ENCODE measurements at regions of chr4 and their contacts with region 1.

Region 1: GRCh38 chr4:2763511-2763967 is 7.4 kb upstream of the TNIP2 start:
- DNase-seq: no peak
- H3K4me3 Mint-ChIP-seq: peak overlapping the region; percentile 40
- H3K27ac Mint-ChIP-seq: no peak overlapping the region
- H3K4me1 Mint-ChIP-seq: peaks cover 14% of the 10 kb centered on the region
- H3K27me3 Mint-ChIP-seq: no peaks in the 10 kb centered on the region

Region 2: DNA sequence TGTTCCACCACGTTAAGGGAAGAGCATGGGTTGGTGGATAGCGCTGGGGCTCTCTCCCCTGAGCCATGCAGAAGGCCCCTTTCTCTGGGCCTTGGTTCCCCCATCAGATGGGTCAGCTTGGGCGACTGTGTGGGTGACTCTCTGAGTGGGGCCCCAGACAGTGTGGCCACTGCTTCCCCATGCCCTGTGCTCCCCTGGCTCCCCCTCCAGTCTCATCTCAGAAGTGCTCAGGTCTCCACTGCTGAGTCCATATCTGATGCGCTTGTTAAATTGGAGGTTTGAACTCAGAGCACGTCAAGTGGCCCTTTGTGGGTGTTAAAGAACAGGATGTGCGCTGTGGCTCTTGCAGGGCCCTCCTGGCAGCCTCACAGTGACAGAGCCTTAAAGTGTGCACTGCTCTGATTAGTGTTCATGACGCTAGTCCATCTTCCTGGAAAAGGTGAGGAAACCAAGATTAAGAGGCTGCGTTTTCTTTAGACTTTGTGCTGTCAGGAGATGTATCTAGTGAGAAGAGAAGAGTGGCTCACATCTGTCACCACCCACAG is 814.6 kb before region 1 on chr4:
- CTCF ChIA-PET with region 1: no interaction called
- POLR2A ChIA-PET with region 1: no interaction called
- DNase-seq: no peak
- H3K4me3 Mint-ChIP-seq: no peak overlapping the region
- H3K27ac Mint-ChIP-seq: no peak overlapping the region
- H3K4me1 Mint-ChIP-seq: no peaks in the 10 kb centered on the region
- H3K27me3 Mint-ChIP-seq: no peaks in the 10 kb centered on the region

Region 3: DNA sequence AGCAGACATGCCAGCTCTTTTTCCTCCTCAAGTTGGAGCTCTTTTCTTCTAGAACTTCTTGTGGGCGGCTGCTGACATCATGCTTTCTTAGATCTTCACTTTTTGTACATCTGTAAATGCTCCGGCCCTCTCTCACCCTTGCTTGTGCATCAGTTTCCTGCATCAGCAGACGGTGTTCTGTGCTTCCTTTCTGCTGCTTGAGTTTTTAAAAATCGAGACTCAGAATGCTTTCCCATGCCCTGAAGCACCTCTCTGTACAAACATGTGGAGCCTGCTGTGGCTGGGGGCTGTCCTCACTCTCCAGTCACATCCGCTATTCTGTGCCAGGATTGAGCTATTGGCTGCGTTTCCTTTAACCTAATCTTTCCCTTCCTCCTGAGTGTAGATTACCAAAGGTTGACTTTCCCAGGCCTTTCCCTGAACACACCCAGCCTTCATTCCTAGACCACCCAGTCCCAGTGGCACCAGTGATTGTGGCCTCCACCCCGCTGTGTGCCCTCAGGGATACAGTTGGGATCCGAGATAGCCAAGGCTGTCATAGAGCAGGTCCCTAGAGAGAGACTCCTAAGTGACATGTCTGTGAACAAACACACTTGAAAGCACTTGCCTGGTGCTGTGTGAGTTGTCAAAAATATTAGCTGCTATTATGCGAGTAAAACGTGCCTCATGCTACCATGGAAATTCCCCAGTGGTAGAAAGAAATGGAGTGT is 49.3 kb before region 1 on chr4:
- CTCF ChIA-PET with region 1: no interaction called
- POLR2A ChIA-PET with region 1: no interaction called
- DNase-seq: peak; percentile 58
- H3K4me3 Mint-ChIP-seq: no peak overlapping the region
- H3K27ac Mint-ChIP-seq: peak overlapping the region; percentile 87
- H3K4me1 Mint-ChIP-seq: peaks cover 19% of the 10 kb centered on the region
- H3K27me3 Mint-ChIP-seq: no peaks in the 10 kb centered on the region

Region 4: DNA sequence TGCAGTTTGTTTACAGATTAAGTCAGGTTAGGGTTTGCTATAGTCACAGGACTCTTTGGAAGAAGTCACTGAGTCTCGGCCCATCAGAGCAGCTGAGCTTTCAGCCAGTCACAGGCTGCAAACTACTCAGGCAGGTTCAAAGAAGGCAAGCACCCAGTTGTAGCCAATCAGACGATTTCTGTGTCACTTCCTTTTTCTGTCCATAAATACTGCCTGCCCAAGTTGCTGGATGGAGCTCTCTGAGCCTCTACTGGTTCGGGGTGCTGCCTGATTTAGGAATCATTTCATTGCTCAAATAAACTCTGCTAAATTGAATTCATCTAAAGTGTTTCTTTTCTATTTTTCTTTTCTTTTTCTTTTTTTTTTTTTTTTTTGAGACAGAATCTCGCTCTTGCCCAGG is 22.1 kb after region 1 on chr4:
- CTCF ChIA-PET with region 1: interaction called, 14 read pairs
- POLR2A ChIA-PET with region 1: no interaction called
- DNase-seq: peak; percentile 55
- H3K4me3 Mint-ChIP-seq: no peak overlapping the region
- H3K27ac Mint-ChIP-seq: peak overlapping the region; percentile 78
- H3K4me1 Mint-ChIP-seq: peaks cover 32% of the 10 kb centered on the region
- H3K27me3 Mint-ChIP-seq: peaks cover 11% of the 10 kb centered on the region

Region 5: DNA sequence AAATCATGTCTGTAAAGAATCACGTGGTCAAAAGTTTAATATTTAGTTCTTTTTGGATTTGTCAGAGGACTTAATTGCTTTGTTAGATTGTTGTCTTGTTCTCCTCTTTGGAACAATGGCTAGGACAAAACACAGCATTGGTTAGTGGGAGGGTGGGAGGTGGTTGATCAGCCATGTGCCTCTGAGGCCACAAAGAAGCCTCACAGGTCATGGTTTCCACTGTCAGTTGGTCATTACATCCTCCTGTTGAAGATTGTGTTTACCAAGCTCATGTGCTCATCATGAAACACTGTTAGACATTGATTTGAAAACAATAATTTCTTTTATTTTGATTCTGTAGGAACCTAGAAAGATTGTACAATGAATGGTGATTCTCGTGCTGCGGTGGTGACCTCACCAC is 112.0 kb after region 1 on chr4:
- CTCF ChIA-PET with region 1: no interaction called
- POLR2A ChIA-PET with region 1: no interaction called
- DNase-seq: no peak
- H3K4me3 Mint-ChIP-seq: no peak overlapping the region
- H3K27ac Mint-ChIP-seq: no peak overlapping the region
- H3K4me1 Mint-ChIP-seq: peaks cover 32% of the 10 kb centered on the region
- H3K27me3 Mint-ChIP-seq: no peaks in the 10 kb centered on the region

Region 6: DNA sequence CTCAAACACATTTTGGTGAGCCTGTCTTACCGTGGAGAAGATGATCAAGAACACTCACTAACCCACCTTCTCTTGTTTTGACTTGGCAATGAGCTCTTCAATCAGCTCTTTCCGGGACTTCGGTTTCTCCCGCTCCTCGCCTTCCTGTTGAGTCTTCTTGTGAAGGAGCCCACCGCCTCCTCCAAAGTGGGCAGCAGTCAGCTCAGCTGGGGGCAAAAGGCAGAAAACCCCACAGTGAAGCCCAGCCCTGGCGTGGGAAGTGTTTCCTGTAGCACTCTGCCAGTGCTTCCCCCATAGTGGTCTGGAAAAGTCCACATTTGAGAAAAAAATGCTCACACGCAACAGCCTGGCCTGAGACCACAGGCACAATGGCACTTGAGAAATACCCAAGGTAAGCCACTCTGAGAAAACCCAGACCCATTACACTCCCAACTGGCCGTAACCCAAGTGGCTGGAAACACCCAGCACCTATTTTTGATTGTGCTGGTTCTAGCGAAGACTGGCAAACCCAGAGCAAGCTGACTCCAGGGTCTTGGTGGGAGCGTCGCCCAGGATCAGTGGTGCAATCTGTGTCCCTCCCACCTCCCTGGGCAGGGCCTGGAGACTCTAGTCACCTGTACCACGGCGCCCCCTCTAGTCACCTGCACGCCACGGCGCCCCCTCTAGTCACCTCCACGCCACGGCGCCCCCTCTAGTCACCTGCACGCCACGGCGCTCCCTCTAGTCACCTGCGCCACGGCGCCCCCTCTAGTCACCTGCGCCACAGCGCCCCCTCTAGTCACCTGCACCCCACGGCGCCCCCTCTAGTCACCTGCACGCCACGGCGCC is 191.0 kb after region 1 on chr4:
- CTCF ChIA-PET with region 1: interaction called, 16 read pairs
- POLR2A ChIA-PET with region 1: no interaction called
- DNase-seq: peak; percentile 49
- H3K4me3 Mint-ChIP-seq: peak overlapping the region; percentile 6
- H3K27ac Mint-ChIP-seq: peak overlapping the region; percentile 88
- H3K4me1 Mint-ChIP-seq: peaks cover 46% of the 10 kb centered on the region
- H3K27me3 Mint-ChIP-seq: no peaks in the 10 kb centered on the region

Region 7: DNA sequence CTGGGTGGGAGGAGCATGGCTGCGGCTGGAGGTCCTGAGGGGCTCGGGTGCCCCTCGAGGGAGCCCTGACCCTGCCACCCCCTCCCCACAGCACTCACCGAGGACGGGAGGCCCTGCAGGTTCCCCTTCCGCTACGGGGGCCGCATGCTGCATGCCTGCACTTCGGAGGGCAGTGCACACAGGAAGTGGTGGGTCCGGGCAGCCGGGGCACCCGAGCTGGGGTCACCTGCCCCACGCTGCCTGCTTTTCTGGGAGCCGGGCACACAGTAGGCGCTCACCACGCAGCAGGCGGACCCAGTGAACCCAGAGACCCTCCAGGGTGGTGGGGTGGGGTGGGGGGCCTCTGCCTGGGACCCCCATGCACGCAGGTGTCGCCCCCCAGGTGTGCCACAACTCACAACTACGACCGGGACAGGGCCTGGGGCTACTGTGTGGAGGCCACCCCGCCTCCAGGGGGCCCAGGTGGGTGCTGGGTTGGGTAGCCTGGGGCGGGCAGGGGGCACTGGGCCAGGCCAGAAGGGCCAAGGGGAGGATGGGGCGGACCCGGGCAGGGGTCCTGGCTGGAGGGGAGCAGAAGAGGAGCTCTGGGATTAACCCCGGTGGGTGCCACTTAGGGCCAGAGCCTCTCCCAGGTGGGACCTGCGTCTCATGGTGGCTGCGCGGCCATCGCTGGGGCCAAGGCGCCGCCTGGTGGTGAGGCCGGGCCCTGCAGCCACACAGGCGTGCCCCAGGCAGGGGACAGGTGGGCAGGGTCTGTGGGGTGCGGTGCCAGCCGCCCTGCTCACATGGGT is 679.6 kb after region 1 on chr4:
- CTCF ChIA-PET with region 1: no interaction called
- POLR2A ChIA-PET with region 1: no interaction called
- DNase-seq: peak; percentile 62
- H3K4me3 Mint-ChIP-seq: no peak overlapping the region
- H3K27ac Mint-ChIP-seq: no peak overlapping the region
- H3K4me1 Mint-ChIP-seq: no peaks in the 10 kb centered on the region
- H3K27me3 Mint-ChIP-seq: no peaks in the 10 kb centered on the region